ENCODE measurements at regions of chr22 and their contacts with region 1.

Region 1: DNA sequence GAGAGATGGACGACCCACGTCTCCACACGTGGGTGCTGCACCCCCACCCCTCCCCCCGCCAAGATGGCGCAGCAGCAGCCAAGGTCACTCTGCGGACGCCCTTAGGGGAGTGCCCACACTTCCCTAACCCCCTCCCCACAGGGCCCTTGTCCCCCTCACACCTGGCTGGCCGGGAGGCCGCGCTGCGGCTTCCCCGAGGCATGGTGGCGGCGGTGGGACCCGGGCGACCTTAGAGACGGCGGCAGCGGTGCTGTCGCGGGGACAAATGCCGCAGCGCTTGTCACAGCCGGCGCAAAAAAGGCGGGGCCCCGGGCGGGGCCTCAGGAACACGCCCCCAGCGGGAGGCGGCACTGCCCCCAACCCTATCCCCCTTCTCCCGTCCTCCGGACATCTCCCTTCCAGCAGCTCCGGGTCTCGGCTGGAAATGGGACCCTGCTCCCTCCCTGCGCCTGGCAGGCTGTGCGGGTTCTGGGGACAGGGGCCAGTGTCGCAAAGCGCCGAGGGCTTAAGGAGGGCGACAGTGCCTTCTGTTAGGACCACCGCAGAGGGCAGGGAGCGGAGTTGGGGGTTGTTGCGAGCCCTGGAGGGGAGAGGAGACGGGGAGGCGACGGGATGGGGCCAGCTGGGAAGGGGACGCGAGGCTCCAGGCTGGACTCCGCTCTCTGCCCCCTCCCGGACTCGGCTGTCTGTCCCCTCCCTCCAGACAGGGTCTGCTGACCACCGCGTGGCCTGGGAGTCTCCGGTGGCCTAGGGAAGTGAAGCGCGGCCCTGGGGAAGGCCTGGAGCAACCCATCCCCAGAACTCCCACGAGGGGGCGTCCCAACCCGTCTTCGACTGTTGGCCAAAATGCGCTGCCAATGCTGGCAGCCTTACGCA is at the start of gene CHCHD10:
- DNase-seq: peak; percentile 85 to 93
- H3K4me3 ChIP-seq: peak within 1 kb of the TSS; percentile 66 to 87 (median 81)
- H3K27ac ChIP-seq: peak within 1 kb of the TSS; percentile 82 to 87 (median 86)
- H3K4me1 ChIP-seq: peaks cover 39 to 91% (median 73%) of the 10 kb centered on the region in 4 donors
- H3K27me3 ChIP-seq: peaks cover 0 to under 1% (median 0%) of the 10 kb centered on the region in 3 donors
- CTCF ChIP-seq: peak in 5 of 7 experiments; percentile 52 to 84 (median 71)
- EP300 ChIP-seq: no peak
- POLR2A ChIP-seq: peak in 1 of 4 donors; percentile 47
- total RNA-seq, gene CHCHD10: 5.8 to 589 (median 43.2) TPM

Region 2: DNA sequence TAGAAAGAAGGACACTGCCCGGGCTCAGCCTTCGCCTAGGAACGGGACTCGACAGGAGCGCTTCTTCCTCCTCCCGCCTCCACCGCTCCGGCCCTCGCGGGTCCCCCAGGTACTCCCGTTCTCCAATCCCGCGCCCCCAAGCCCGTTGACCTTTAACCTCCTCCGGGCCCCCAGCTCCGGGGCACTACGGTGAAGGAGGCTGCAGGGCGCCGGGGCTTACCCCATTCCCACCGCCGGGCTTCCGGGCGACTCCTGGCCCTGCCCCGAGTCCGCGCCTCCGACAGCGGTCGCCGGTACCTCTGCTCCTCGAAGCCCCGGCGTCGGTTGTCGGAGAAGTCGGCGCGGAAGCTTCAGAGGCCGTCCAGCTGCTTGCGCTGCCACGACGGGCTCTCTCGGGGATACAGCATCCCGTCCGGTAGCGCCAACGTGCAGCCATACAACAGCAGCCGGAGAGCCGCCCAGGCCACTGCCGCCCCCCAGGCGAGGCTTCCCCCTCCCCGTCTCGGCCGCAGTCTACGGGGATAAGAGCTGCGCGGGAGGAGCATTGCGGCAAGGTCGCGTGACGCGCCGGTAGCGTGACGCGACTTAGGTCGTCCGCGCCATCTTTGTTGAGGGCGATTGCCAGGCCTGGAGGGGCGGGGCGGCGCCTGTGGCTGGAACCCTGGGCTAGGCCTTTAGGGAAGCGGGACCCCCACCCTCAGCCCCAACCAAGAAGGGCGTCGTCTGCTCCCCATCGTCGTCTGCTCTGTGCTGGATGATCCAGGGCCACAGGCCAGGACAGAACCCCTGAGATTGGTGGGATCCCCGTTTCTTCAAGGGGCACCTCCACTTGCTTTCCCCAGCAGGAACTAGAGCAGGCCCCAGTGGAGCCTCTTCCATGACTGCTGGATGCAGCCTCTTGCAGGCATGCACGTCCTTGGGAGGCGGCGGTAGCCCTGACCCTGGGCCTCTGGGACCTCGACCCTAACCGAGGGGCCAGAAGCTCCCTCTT is 50.8 kb before region 1 on chr22:
- intact Hi-C with region 1: no loop called
- DNase-seq: peak; percentile 87 to 95
- H3K4me3 ChIP-seq: peak overlapping the region; percentile 60 to 96 (median 84)
- H3K27ac ChIP-seq: peak overlapping the region; percentile 66 to 89 (median 85)
- H3K4me1 ChIP-seq: peaks cover 10 to 24% (median 22%) of the 10 kb centered on the region in 4 donors
- H3K27me3 ChIP-seq: no peaks in the 10 kb centered on the region
- CTCF ChIP-seq: no peak
- EP300 ChIP-seq: no peak
- POLR2A ChIP-seq: peak in 1 of 4 donors; percentile 25

Region 3: DNA sequence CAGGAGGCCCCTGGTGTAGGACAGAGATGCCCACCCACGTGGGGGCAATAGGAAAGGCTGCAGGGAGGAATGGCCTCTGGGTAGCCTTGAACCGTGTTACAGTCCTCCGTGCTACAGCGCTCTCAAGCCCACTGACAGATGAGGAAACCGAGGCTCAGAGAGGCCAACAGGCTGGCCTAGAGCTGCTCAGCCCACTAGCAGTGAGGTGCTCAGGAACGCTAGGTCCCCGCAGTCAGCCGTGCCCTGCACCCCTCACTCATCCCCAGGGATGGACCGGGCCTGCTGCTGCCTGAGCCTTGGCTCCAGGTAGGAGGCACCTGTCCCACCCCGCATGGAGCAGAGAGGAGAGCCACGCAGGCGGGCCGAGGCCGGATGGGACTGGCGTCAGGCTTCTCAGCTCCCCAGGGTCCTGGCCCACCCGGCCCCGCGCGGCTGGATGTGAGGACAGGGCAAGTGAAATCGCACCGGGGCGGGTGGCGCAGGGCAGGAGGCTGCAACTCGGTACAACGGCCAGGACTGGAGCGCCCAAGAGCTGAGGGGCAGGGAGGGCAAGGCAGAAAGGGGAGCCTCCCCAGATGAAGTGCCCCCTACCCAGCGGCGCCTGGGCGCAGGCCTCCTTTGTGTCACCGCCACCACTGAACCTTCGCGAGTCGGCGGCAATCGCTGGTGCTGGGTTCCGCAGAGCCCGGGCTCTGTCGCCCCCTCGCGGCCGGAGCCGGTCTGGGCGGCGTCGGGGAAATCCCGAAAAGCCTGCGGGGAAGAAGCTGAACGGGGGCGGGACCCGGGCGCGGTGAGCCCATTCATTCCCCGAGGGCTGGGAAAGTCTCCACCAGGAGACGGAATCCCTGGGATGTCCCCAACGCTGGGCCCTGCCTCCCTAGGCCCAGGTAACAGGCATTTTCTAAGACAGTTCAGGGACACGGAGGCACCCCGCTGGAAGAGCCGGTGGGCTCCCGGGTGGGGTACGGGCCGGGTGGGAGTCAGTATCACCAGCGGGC is 81.4 kb after region 1 on chr22:
- intact Hi-C with region 1: loop called (anchors 5 kb)
- DNase-seq: peak; percentile 91 to 94
- H3K4me3 ChIP-seq: peak overlapping the region in 3 of 4 donors; percentile 9 to 40 (median 9)
- H3K27ac ChIP-seq: no peak overlapping the region
- H3K4me1 ChIP-seq: peaks cover 12 to 40% (median 26%) of the 10 kb centered on the region in 4 donors
- H3K27me3 ChIP-seq: peaks cover 0 to 5% (median 0%) of the 10 kb centered on the region in 3 donors
- CTCF ChIP-seq: peak in 6 of 7 experiments; percentile 42 to 98 (median 92)
- EP300 ChIP-seq: no peak
- POLR2A ChIP-seq: no peak

Measured in stomach (tissue), 19 donors.